Ovary (tissue), 10 donors: ENCODE measurements at regions of chr19 and their contacts with region 1.

Region 1: DNA sequence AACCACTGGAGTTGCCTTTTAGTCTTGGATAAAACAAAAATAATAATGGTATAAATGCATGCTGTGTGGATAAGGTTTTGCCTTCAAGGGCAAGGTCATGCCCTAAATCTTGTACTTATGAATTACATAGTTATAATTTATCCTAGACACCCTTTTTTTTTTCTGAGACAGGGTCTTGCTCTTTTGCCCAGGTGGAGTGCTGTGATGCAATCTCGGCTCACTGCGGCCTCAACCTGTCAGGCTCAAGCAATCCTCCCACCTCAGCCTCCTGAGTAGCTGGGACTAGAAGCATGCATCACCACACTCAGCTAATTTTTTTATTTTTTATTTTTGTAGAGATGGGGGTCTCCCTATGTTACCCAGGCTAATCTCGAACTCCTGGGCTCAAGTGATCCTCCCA is 7.7 kb upstream of the DACT3 start:
- DNase-seq: no peak
- H3K4me3 ChIP-seq: no peak overlapping the region
- H3K27ac ChIP-seq: no peak overlapping the region
- H3K4me1 ChIP-seq: no peaks in the 10 kb centered on the region
- H3K27me3 ChIP-seq: no peaks in the 10 kb centered on the region
- CTCF ChIP-seq: no peak
- EP300 ChIP-seq: no peak
- POLR2A ChIP-seq: no peak

Region 2: GRCh38 chr19:46634045-46634655 is 34.5 kb before region 1 on chr19:
- intact Hi-C with region 1: loop called in 1 of 4 experiments (anchors 5 kb)
- DNase-seq: peak; percentile 50 to 89 (median 85)
- H3K4me3 ChIP-seq: peak overlapping the region; percentile 31
- H3K27ac ChIP-seq: no peak overlapping the region
- H3K4me1 ChIP-seq: no peaks in the 10 kb centered on the region
- H3K27me3 ChIP-seq: no peaks in the 10 kb centered on the region
- CTCF ChIP-seq: no peak
- EP300 ChIP-seq: no peak
- POLR2A ChIP-seq: no peak

Region 3: GRCh38 chr19:46728693-46729676 is 60.3 kb after region 1 on chr19:
- intact Hi-C with region 1: no loop called
- DNase-seq: peak; percentile 65 to 86 (median 81)
- H3K4me3 ChIP-seq: no peak overlapping the region
- H3K27ac ChIP-seq: peak overlapping the region; percentile 6 to 39
- H3K4me1 ChIP-seq: no peaks in the 10 kb centered on the region
- H3K27me3 ChIP-seq: no peaks in the 10 kb centered on the region
- CTCF ChIP-seq: peak; percentile 81 to 97 (median 89)
- EP300 ChIP-seq: no peak
- POLR2A ChIP-seq: no peak